PC-3 (cell line): ENCODE measurements at regions of chr14 and their contacts with region 1.

Region 1: GRCh38 chr14:55579724-55580469 is at the start of gene KTN1:
- DNase-seq: peak; percentile 97
- ATAC-seq: peak; percentile 85
- H3K4me3 ChIP-seq: peak within 1 kb of the TSS; percentile 82
- H3K27ac ChIP-seq: peak within 1 kb of the TSS; percentile 68
- H3K4me1 ChIP-seq: peaks cover 53% of the 10 kb centered on the region
- H3K27me3 ChIP-seq: no peaks in the 10 kb centered on the region
- CTCF ChIP-seq: no peak
- total RNA-seq, gene KTN1: 249 and 251 TPM in 2 replicates

Region 2: DNA sequence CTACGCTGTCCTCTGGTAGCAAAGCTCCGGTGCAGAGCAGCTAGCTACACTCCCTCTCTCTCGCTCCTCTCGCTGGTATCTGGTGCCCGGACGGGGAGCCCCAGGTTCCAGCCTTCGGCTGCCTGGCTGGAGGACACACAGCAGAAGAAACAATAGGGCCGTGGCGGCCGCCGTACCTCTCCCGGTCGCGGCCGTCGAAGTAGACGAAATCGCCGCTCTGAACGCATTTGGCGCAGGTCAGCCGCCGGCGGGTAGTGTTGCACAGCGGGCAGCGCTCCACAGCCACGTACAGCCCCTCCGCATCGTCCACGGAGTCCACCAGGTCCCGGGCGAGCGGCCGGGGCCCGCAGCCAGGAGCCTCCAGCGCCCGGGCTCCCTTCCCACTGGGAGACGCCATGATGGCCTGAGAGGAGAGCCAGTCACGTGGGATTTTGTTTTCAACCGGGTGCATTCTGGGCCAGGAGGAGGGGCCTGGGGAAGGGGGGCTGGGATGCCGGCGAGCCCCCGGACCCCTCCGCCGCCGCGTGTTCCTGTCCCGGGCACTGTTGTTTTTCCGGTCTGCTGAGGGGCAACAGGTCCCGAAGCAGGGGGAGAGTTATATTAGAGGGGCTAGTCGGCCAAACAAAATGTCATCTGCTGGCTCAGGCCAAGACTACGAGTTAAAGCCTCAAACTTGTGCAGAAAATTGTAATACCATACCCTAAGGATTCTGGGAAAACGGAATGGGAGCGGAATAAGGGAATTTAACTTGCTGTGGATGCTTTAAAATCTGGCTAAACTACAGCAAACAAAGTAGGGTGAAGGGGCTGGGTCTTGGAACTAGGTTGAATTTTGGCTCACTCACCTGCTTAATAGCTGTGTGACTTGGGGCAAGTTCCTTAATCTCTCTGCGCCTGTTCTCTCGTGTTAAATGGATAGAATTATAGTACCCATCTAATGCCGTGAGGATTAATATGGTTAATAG is 168.2 kb before region 1 on chr14 and contains the start of gene ATG14:
- CTCF ChIA-PET with region 1: no interaction called
- POLR2A ChIA-PET with region 1: no interaction called
- intact Hi-C with region 1: no loop called
- DNase-seq: peak; percentile 94
- ATAC-seq: peak; percentile 93
- H3K4me3 ChIP-seq: peak within 1 kb of the TSS; percentile 80
- H3K27ac ChIP-seq: peak within 1 kb of the TSS; percentile 71
- H3K4me1 ChIP-seq: peaks cover 33% of the 10 kb centered on the region
- H3K27me3 ChIP-seq: no peaks in the 10 kb centered on the region
- CTCF ChIP-seq: no peak
- total RNA-seq, gene ATG14: 20.2 and 22.5 TPM in 2 replicates

Region 3: DNA sequence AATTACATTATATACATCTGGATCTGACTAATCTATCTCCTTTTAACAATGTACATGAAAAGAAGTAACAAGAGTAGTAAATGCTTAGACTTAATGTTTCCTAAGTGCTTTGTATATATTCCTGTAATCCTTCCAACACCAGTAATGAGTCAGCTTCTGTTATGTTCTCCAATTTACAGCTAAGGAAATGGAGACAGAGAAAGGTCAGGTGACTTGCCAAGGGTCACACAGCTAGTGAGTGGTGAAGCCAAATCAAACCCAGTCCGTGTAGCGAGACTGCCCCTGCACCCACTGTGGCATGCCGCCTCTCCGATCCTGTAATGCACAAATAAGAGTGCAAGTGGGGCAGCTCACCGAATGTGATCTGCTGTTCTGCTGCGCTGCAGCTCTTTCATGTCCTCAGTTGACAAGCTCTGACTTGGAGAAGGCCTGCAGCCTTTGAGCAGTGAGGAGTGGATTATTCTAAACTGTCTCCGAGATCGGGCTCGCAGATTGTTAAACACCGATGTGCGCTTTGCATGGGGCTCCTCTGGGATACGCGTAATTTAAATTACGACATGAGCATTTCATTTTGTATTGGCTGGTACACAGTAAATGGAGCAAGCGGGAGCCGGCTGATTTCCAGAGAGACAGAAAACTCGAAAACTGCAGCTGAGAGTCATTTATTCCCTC is 64.9 kb before region 1 on chr14:
- CTCF ChIA-PET with region 1: no interaction called
- POLR2A ChIA-PET with region 1: no interaction called
- intact Hi-C with region 1: no loop called
- DNase-seq: peak; percentile 56
- ATAC-seq: peak; percentile 88
- H3K4me3 ChIP-seq: no peak overlapping the region
- H3K27ac ChIP-seq: no peak overlapping the region
- H3K4me1 ChIP-seq: peaks cover 8% of the 10 kb centered on the region; the same call in 1 of the 2 replicates
- H3K27me3 ChIP-seq: no peaks in the 10 kb centered on the region
- CTCF ChIP-seq: no peak

Region 4: DNA sequence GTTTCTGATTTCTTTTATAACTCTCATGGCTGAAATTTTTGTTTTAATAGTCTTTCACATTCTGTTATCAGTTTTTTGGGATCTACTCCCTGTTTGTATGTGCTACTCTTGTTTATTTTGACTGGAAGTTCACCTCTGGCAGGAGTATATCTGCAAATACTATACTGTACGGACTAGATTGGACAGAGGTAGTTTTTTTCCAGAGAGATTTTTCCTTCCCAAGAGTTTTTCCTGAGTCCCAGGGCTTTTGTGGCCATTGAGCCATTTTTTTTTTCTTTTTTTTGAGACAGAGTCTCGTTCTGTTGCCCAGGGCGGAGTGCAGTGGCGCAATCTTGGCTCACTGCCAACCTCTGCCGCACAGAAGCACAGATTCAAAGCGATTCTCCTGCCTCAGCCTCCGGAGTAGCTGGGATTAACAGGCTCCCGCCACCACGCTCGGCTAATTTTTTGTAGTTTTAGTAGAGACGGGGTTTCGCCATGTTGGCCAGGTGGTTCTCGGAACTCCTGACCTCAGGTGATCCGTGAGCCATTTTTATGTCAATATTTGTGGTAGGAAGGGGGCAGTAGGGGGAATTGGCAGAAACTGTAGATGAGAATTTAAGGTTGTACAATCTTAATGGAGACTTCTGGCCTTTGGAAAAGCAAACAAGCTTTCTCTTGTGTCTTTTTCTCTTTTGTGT is 19.4 kb after region 1 on chr14:
- CTCF ChIA-PET with region 1: no interaction called
- POLR2A ChIA-PET with region 1: interaction called, 11 read pairs
- intact Hi-C with region 1: loop called (anchors 2 kb)
- DNase-seq: peak; percentile 95
- ATAC-seq: peak; percentile 61
- H3K4me3 ChIP-seq: peak overlapping the region; percentile 66
- H3K27ac ChIP-seq: peak overlapping the region; percentile 88
- H3K4me1 ChIP-seq: peaks cover 36% of the 10 kb centered on the region
- H3K27me3 ChIP-seq: no peaks in the 10 kb centered on the region
- CTCF ChIP-seq: 0 out of 2 replicates have a peak, but pooled peaks have one; percentile 13

Region 5: GRCh38 chr14:55609681-55610080 is 29.8 kb after region 1 on chr14:
- CTCF ChIA-PET with region 1: no interaction called
- POLR2A ChIA-PET with region 1: no interaction called
- intact Hi-C with region 1: no loop called
- DNase-seq: peak; percentile 82
- ATAC-seq: peak; percentile 60
- H3K4me3 ChIP-seq: peak overlapping the region; percentile 15; the same call in 1 of the 2 replicates
- H3K27ac ChIP-seq: 0 out of 2 replicates have a peak overlapping the region, but pooled peaks have one; percentile 0
- H3K4me1 ChIP-seq: peaks cover 55% of the 10 kb centered on the region
- H3K27me3 ChIP-seq: no peaks in the 10 kb centered on the region
- CTCF ChIP-seq: no peak

Region 6: GRCh38 chr14:55624913-55625312 is 45.0 kb after region 1 on chr14:
- CTCF ChIA-PET with region 1: no interaction called
- POLR2A ChIA-PET with region 1: no interaction called
- intact Hi-C with region 1: loop called (anchors 5 kb)
- DNase-seq: no peak
- ATAC-seq: no peak
- H3K4me3 ChIP-seq: no peak overlapping the region
- H3K27ac ChIP-seq: no peak overlapping the region
- H3K4me1 ChIP-seq: peaks cover 6% of the 10 kb centered on the region; the same call in 1 of the 2 replicates
- H3K27me3 ChIP-seq: no peaks in the 10 kb centered on the region
- CTCF ChIP-seq: no peak

Region 7: DNA sequence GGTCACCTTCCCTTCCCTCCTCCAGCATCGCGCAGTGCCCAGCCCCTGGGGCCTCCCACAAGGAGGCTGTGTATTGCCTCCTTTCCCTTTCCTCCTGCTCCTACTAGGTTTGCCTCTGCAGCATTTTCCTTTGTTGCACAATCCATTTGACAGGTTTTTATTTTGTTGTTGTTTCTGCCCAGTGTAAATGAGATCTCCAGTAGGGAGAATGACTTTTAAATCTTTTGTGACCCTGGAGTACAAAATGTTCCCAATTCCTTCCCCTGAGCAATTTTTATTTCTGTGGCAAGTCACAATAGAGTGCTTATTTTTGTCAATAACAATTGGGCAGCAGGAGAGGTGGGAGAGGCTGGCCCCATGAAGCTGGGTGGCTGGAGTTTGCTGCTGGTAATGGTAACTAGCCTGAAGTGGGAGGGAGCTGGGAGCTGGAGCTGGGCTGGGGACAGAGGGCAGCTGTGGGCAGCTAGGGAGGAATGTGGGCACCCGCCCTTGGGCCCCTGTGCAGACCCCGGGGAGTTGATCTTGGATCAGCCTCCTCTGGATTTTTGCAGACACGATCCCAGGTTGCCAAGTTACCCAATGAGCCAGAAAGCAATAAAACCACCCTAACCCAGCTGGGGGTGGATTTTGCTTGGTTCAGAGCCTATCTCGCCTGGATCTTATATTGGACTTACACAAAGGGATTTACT is 160.2 kb after region 1 on chr14:
- CTCF ChIA-PET with region 1: no interaction called
- POLR2A ChIA-PET with region 1: no interaction called
- intact Hi-C with region 1: no loop called
- DNase-seq: peak; percentile 71
- ATAC-seq: peak; percentile 75
- H3K4me3 ChIP-seq: no peak overlapping the region
- H3K27ac ChIP-seq: no peak overlapping the region
- H3K4me1 ChIP-seq: peaks cover 15% of the 10 kb centered on the region
- H3K27me3 ChIP-seq: no peaks in the 10 kb centered on the region
- CTCF ChIP-seq: no peak